Activated naive CD4-positive, alpha-beta T cell treated with anti-CD3 and anti-CD28 coated beads for 36 hours (primary cell): ENCODE measurements at regions of chr1 and their contacts with region 1.

Region 1: DNA sequence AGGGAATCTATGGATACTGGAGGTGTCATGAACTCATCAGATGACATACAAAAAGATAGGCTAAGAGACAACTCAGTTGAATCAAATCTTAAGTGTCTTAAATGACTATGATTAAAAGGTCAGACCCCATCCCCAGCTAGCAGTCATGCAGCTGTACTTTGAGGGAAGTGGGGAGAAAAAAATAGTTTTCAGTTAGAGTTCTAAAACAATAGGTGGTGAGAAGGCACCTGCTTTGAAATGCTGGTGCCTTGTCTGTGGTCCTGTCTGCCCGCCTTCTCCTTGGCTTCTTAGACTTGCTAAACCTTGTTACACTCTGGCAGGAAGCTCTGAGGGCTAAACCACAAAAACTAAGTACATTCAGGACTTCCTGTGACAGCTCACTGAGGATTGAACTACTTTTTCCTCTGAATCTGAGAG is 15.3 kb downstream of the CD2 start:
- DNase-seq: peak; percentile 88
- H3K4me3 Mint-ChIP-seq: peak overlapping the region; percentile 100
- H3K27ac Mint-ChIP-seq: peak overlapping the region; percentile 100
- H3K4me1 Mint-ChIP-seq: peaks cover 90% of the 10 kb centered on the region
- H3K27me3 Mint-ChIP-seq: no peaks in the 10 kb centered on the region

Region 2: GRCh38 chr1:116151739-116152576 is 617.6 kb before region 1 on chr1:
- CTCF ChIA-PET with region 1: no interaction called
- intact Hi-C with region 1: loop called (anchors 5 kb)
- DNase-seq: peak; percentile 86
- H3K4me3 Mint-ChIP-seq: peak overlapping the region; percentile 60
- H3K27ac Mint-ChIP-seq: peak overlapping the region; percentile 14
- H3K4me1 Mint-ChIP-seq: peaks cover 18% of the 10 kb centered on the region
- H3K27me3 Mint-ChIP-seq: no peaks in the 10 kb centered on the region

Region 3: DNA sequence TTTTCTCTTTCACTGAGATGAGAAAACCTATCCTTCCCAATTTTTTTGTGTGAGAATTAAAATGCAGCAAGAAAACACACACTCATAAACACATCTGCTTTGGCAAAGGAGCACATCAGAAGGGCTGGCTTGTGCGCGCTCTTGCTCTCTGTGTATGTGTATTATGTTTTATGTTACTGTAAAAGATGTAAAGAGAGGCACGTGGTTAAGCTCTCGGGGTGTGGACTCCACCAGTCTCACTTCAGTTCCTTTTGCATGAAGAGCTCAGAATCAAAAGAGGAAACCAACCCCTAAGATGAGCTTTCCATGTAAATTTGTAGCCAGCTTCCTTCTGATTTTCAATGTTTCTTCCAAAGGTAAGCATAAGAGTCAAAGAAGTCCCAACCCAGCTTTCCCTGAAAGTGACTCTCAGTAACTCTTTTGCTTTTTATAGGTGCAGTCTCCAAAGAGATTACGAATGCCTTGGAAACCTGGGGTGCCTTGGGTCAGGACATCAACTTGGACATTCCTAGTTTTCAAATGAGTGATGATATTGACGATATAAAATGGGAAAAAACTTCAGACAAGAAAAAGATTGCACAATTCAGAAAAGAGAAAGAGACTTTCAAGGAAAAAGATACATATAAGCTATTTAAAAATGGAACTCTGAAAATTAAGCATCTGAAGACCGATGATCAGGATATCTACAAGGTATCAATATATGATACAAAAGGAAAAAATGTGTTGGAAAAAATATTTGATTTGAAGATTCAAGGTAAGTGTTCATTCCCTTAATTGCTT is 15.2 kb before region 1 on chr1 and contains the start of gene CD2:
- CTCF ChIA-PET with region 1: interaction called, 43 read pairs
- intact Hi-C with region 1: loop called (anchors 1 kb)
- DNase-seq: peak; percentile 81
- H3K4me3 Mint-ChIP-seq: peak within 1 kb of the TSS; percentile 100
- H3K27ac Mint-ChIP-seq: peak within 1 kb of the TSS; percentile 100
- H3K4me1 Mint-ChIP-seq: peaks cover 28% of the 10 kb centered on the region
- H3K27me3 Mint-ChIP-seq: no peaks in the 10 kb centered on the region
- total RNA-seq, gene CD2: 251 to 264 TPM

Region 4: DNA sequence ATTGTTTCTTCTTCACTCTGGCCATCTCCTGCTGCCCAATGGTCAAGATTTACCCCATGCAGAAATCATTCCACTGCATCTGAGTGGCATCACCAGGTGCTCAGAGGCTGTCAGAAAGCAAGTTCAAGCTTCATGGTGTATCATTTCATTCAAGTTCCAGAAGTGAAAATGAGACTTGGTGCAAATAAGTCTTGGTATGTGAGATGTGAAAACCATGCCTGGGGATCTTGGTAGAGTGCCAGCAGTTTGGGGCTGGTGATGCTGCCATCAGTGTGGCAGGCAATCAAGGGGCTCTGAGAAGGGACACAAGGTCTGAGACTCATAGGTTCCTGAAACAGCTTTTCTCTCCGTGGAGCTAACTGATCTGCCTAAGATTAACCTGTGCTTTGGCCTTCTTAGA is 36.7 kb after region 1 on chr1:
- CTCF ChIA-PET with region 1: interaction called, 44 read pairs
- intact Hi-C with region 1: loop called (anchors 1 kb)
- DNase-seq: peak; percentile 91
- H3K4me3 Mint-ChIP-seq: peak overlapping the region; percentile 86
- H3K27ac Mint-ChIP-seq: peak overlapping the region; percentile 97
- H3K4me1 Mint-ChIP-seq: peaks cover 90% of the 10 kb centered on the region
- H3K27me3 Mint-ChIP-seq: no peaks in the 10 kb centered on the region

Region 5: GRCh38 chr1:116826818-116827606 is 57.4 kb after region 1 on chr1:
- CTCF ChIA-PET with region 1: interaction called, 30 read pairs
- intact Hi-C with region 1: loop called (anchors 1 kb)
- DNase-seq: peak; percentile 92
- H3K4me3 Mint-ChIP-seq: peak overlapping the region; percentile 83
- H3K27ac Mint-ChIP-seq: peak overlapping the region; percentile 97
- H3K4me1 Mint-ChIP-seq: peaks cover 74% of the 10 kb centered on the region
- H3K27me3 Mint-ChIP-seq: no peaks in the 10 kb centered on the region

Region 6: DNA sequence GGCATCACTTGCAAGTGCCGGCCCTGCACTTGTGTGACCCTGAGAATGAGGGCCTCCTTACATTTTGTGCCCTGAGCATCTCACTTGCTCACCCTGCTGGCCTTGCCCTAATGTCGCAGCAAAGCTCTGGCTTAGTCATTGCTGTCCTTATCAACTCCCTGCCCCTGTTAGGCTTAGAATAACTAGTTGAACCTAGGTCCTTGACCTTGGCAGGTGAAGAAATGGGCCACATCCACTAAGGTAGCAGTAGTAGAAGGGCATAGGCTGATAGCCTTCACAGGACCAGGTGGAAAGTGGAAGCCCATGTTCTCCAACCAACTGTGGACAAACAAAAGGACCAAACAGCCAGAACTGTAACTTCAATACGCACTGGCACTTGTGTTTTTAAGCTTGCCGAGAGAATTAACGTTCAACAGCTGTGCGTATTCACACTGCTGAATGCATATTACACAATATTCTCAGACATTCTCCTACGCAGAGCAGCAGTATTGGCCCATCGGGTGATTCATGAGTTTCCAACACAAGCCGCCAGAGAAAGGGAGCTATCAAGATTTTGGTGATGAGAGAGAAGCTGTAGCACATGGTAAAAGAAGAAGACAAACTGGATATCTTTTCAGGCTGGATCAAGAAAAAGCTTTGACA is 112.4 kb after region 1 on chr1:
- CTCF ChIA-PET with region 1: interaction called, 10 read pairs
- intact Hi-C with region 1: loop called (anchors 1 kb)
- DNase-seq: peak; percentile 77
- H3K4me3 Mint-ChIP-seq: no peak overlapping the region
- H3K27ac Mint-ChIP-seq: no peak overlapping the region
- H3K4me1 Mint-ChIP-seq: peaks cover 12% of the 10 kb centered on the region
- H3K27me3 Mint-ChIP-seq: no peaks in the 10 kb centered on the region